ENCODE measurements at regions of chr17 and their contacts with region 1.

Region 1: DNA sequence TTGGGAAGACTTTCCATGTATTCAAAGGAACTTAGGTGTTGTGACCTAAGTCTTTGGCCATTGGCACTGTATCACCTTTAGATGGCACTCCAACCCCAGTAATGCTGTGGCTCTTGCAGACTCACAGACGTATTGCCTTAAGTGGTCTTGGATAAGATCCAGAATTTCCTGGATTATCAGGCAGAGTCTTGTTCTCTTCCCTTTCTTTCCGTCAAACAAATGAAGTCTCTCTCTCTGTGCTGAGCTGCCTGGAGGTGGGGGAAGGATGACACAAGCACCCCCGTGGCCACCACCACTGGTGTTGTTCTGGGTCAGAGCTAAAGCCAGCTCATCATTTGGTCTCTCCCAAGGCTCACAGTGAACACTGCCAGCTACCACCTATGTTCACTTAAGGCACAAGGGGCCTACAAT is 789.9 kb upstream of the KIF2B start:
- DNase-seq: peak; percentile 23
- H3K4me3 ChIP-seq: no peak overlapping the region
- H3K27ac ChIP-seq: no peak overlapping the region
- H3K4me1 ChIP-seq: no peaks in the 10 kb centered on the region
- H3K27me3 ChIP-seq: no peaks in the 10 kb centered on the region
- CTCF ChIP-seq: peak; percentile 28 to 44 (median 41)
- EP300 ChIP-seq: no peak
- POLR2A ChIP-seq: no peak

Region 2: DNA sequence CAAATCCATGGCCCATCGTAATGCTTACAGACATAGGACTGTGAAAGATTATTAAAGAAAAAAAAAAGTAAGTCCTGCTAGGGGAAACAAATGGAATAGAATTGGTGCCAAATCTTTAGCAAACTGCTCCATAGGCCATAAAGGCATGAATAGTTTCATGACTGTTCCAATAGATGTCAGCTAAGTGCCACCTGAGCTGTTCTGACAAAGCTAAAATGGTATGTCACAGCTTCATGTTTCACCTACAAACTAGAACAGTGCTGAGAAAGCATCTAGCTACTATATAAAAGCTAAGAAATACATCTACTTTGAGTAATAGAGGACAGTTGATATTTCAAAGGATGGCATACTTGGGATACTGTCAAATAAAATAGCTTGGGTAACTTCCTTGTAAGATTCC is 102.7 kb before region 1 on chr17:
- in situ Hi-C with region 1: no loop called
- intact Hi-C with region 1: no loop called
- DNase-seq: no peak
- H3K4me3 ChIP-seq: no peak overlapping the region
- H3K27ac ChIP-seq: no peak overlapping the region
- H3K4me1 ChIP-seq: no peaks in the 10 kb centered on the region
- H3K27me3 ChIP-seq: no peaks in the 10 kb centered on the region
- CTCF ChIP-seq: no peak
- EP300 ChIP-seq: no peak
- POLR2A ChIP-seq: no peak

Region 3: DNA sequence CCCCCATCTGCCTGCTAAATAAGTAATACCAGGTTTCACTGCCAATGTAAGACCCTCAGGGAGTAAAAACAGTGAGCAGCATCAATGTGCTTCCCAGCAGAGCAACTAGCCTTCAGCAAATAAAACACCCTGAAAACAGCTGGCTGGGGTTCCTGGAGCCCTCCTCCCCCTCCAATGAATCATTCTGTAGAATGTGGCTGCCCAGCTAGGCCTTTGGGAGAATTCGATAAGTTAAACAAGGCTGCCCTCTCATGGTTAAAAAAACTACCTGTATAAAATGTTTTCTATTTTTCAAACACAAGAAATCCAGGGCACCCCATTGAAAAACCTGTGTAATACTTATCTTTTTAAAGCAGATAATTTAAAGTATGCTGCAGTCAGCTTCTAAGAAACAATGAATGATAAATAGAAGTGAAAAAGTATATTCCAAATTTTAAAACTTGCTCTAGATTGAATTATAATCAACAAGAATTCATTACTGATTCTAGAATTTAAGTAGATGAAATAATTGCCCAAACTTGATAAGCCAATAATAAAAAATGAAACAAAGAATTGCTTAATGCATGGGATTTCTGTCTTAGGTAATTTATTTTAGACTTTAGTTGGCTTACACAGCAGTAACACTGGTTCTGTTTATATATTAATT is 1858.4 kb after region 1 on chr17:
- in situ Hi-C with region 1: loop called in 1 of 4 experiments (anchors 25 kb)
- intact Hi-C with region 1: no loop called
- DNase-seq: no peak
- H3K4me3 ChIP-seq: no peak overlapping the region
- H3K27ac ChIP-seq: no peak overlapping the region
- H3K4me1 ChIP-seq: no peaks in the 10 kb centered on the region
- H3K27me3 ChIP-seq: no peaks in the 10 kb centered on the region
- CTCF ChIP-seq: peak in 3 of 5 experiments; percentile 10 to 30 (median 23)
- EP300 ChIP-seq: no peak
- POLR2A ChIP-seq: no peak

Measured in transverse colon (tissue), 4 donors.